ENCODE measurements at regions of chr11 and their contacts with region 1.

Region 1: DNA sequence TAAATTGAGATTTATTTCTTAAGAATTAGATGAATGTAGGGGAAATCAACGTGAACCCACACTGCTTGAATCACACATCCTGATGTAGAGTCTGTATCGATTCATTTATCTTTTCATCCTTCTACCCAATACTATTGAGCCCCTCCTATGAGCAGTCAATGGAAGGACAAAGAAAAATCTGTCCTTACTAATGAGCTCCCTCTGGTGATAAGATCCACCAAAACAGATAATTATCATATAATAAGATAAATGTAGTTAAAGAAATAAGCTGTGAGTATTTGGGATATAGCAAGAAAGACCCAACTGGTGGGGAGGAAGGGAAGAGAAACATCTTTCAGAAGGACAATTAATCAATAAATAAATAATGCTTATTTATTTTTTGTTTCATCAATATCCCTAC is 385.1 kb upstream of the CCDC90B start:
- DNase-seq: no peak
- H3K4me3 ChIP-seq: no peak overlapping the region
- H3K27ac ChIP-seq: no peak overlapping the region
- H3K4me1 ChIP-seq: no peaks in the 10 kb centered on the region
- H3K27me3 ChIP-seq: peaks cover 2% of the 10 kb centered on the region
- CTCF ChIP-seq: peak in 1 of 2 donors; percentile 32

Region 2: GRCh38 chr11:83292709-83293456 is 378.4 kb before region 1 on chr11:
- CTCF ChIA-PET with region 1: interaction called, 12 read pairs
- dilution Hi-C with region 1: no loop called
- in situ Hi-C with region 1: no loop called
- intact Hi-C with region 1: loop called (anchors 5 kb)
- DNase-seq: peak; percentile 50
- H3K4me3 ChIP-seq: no peak overlapping the region
- H3K27ac ChIP-seq: no peak overlapping the region
- H3K4me1 ChIP-seq: no peaks in the 10 kb centered on the region
- H3K27me3 ChIP-seq: no peaks in the 10 kb centered on the region
- CTCF ChIP-seq: peak; percentile 70 to 76

Region 3: GRCh38 chr11:83306200-83307080 is 364.8 kb before region 1 on chr11:
- CTCF ChIA-PET with region 1: interaction called, 6 read pairs
- dilution Hi-C with region 1: no loop called
- in situ Hi-C with region 1: no loop called
- intact Hi-C with region 1: loop called (anchors 5 kb)
- DNase-seq: no peak
- H3K4me3 ChIP-seq: no peak overlapping the region
- H3K27ac ChIP-seq: no peak overlapping the region
- H3K4me1 ChIP-seq: no peaks in the 10 kb centered on the region
- H3K27me3 ChIP-seq: no peaks in the 10 kb centered on the region
- CTCF ChIP-seq: peak in 1 of 2 donors; percentile 8

Region 4: GRCh38 chr11:83521647-83522596 is 149.4 kb before region 1 on chr11:
- CTCF ChIA-PET with region 1: no interaction called
- dilution Hi-C with region 1: no loop called
- in situ Hi-C with region 1: no loop called
- intact Hi-C with region 1: loop called (anchors 2 kb)
- DNase-seq: no peak
- H3K4me3 ChIP-seq: no peak overlapping the region
- H3K27ac ChIP-seq: no peak overlapping the region
- H3K4me1 ChIP-seq: no peaks in the 10 kb centered on the region
- H3K27me3 ChIP-seq: peaks cover 2% of the 10 kb centered on the region
- CTCF ChIP-seq: peak in 1 of 2 donors; percentile 54

Measured in mammary epithelial cell (primary cell).